Lower leg skin (tissue), 4 donors: ENCODE measurements at regions of chr20 and their contacts with region 1.

Region 1: DNA sequence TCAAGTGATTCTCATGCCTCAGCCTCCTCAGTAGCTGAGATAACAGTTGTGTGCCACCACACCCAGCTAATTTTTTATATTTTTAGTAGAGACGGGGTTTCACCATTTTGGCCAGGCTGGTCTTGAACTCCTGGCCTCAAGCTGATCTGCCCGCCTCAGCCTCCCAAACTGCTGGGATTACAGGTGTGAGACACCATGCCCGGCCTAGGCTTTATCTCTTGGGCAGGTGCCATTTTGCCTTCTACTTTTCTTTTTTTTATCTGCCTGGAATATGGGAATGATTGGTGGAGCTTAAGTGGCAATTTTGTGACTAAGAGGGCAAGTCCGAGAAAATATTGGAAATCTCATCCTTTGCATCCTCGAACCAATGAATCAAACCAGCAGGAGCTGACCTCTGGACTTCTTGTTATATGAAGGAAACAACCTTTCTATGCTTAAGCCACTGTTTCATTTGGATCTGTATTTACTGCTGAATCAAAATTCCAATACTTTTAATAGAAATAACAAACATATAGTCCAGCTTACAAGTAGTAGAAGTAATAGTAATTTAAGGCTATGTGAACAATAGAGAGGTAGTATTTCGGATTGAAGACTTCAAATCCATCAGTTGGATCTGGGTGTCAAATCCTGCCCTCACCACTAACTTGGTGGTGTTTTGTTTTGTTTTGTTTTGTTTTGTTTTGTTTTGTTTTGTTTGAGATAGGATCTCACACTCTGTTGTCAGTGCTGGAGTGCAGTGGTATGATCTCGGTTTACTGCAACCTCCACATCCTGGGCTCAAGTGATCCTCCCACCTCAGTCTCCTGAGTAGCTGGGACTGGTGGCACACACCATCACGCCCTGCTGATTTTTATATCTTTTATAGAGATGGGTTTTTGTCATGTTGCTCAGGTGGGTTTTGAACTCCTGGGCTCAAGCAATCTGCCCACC is 129.1 kb upstream of the ZNF217 start:
- DNase-seq: no peak
- H3K4me3 ChIP-seq: no peak overlapping the region
- CTCF ChIP-seq: no peak
- POLR2A ChIP-seq: no peak

Region 2: GRCh38 chr20:53677447-53678314 is 45.1 kb before region 1 on chr20:
- intact Hi-C with region 1: loop called (anchors 10 kb)
- DNase-seq: peak in 1 of 2 donors; percentile 79
- H3K4me3 ChIP-seq: no peak overlapping the region
- CTCF ChIP-seq: no peak
- POLR2A ChIP-seq: no peak

Region 3: GRCh38 chr20:53847129-53847836 is 124.5 kb after region 1 on chr20:
- intact Hi-C with region 1: no loop called
- DNase-seq: no peak
- H3K4me3 ChIP-seq: no peak overlapping the region
- CTCF ChIP-seq: no peak
- POLR2A ChIP-seq: no peak

Region 4: DNA sequence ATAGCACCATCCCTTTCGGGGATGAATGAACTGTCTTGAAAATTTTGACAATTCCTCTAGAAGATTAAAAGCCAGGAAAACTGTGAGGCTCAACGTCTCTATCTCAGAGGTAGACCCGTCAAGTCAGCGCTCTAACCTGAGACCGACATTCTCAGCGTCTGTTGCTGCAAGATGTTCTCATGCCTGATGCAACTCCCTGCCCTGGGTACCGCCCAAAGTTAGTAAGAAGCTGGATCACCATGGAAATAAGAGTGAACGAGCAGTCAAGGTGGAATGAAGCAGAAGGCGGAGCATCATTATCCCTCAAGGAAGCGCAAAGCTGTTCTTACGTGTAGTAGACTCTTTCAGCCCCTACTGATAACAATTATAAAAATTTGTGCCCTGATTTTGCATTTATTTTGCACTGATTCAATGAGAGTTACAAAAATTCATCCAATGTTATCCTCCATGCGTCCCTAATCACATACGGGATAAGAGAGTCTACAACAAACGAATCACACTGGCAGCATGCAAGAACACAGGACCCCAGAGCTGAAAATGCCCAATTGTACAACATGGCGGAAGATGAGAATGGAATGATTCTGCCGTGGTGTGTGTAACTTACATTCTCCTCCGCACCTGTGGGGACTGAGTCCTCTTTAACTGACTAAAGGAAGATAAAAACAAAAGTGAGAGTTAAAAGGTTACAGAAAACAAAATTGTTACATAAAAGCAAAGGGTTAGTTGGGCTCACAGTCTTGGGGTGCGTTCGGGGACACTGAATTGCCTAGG is 252.2 kb after region 1 on chr20:
- intact Hi-C with region 1: no loop called
- DNase-seq: peak; percentile 25 to 87
- H3K4me3 ChIP-seq: no peak overlapping the region
- CTCF ChIP-seq: no peak
- POLR2A ChIP-seq: no peak